Heart right ventricle (tissue), 16 donors: ENCODE measurements at regions of chr22 and their contacts with region 1.

Region 1: DNA sequence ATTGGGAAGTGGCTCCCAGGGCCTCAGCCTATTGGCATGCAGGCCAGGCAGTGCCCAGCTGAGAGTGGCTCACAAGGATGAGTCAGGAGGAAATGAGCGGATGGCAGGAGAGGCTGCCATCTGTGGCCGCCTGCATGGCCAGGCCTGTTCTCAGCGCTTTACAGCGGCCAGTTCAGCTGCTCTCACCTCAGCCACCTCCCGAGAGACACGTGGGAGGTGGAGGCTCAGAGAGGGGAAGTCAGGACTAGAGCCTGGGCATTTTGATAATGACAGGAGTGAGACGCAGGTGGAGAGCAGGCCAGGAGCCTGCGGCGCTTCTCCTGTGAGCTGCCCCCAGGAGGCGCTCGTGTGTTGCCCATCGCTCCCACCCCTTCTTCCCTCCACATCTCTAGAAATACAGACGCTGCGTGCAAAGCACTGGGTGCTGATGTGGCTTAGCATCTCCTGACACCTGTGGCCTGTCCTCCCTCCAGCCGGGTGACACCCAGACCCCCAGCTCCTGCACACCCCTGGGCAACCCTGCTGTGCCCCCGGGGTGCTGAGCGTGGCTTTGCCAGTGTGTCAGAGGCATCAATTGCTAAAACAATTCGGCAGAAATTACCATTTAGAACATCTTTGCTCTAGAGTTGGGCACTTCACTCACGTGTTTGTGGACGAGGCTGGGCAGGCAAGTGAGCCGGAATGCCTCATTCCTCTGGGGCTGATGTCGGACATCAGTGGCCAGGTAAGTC is 21.4 kb upstream of the PANX2 start:
- DNase-seq: peak in 1 of 2 donors; percentile 60
- ATAC-seq: peak; percentile 54 to 81 (median 73)
- H3K4me3 ChIP-seq: no peak overlapping the region
- H3K27ac ChIP-seq: no peak overlapping the region
- H3K4me1 ChIP-seq: peaks cover 0 to 20% (median 0%) of the 10 kb centered on the region in 9 donors
- H3K27me3 ChIP-seq: peaks cover 0 to 22% (median 13%) of the 10 kb centered on the region in 7 donors
- CTCF ChIP-seq: peak; percentile 38 to 90 (median 71)

Region 2: DNA sequence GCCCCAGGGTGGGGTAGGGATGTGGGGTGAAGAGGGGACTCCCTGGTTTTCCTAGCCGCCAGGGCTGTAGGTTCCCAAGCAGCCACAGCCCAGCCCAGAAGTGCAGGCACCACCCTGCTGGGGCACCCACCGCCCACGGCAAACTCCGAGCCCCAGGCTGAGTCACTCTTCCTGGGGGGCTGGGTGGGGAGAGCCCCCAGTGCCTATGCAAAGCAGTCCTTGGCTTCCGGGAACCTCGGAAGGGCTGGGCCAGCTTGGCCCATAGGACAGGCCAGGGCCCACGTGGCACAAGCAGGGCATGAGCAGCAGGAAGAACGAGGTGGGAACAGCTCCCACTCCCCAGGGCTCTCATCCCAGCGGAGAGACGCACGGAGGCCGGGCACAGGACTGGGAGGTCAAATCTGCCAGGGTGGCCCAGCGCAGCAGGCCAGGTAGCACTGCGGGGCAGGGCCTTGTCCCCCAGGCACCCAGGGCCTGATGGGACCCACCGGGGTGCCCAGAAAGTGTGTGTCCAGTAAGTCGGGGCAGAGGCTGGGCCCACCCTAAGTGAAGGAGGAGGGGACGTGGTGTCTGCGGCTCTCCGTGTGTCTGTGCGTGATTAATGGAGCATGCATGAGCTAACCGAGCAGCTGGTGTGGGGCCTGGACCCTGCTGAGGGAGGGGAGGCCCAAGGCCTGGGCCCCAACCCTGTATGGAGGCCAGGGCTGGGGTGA is 132.0 kb before region 1 on chr22:
- intact Hi-C with region 1: no loop called
- DNase-seq: no peak
- ATAC-seq: peak in 1 of 8 donors; percentile 36
- H3K4me3 ChIP-seq: no peak overlapping the region
- H3K27ac ChIP-seq: peak overlapping the region in 1 of 10 donors; percentile 56
- H3K4me1 ChIP-seq: peaks cover 0 to 10% (median 6%) of the 10 kb centered on the region in 9 donors
- H3K27me3 ChIP-seq: peaks cover 19 to 66% (median 59%) of the 10 kb centered on the region in 7 donors
- CTCF ChIP-seq: no peak

Region 3: GRCh38 chr22:50209893-50210292 is 60.7 kb after region 1 on chr22:
- intact Hi-C with region 1: loop called in 9 of 10 experiments (anchors 1 to 5 kb)
- DNase-seq: peak in 1 of 2 donors; percentile 58
- ATAC-seq: peak in 7 of 8 donors; percentile 15 to 55 (median 34)
- H3K4me3 ChIP-seq: no peak overlapping the region
- H3K27ac ChIP-seq: no peak overlapping the region
- H3K4me1 ChIP-seq: peaks cover 13 to 36% (median 23%) of the 10 kb centered on the region in 9 donors
- H3K27me3 ChIP-seq: no peaks in the 10 kb centered on the region
- CTCF ChIP-seq: peak; percentile 74 to 86 (median 83)

Region 4: GRCh38 chr22:50215297-50216054 is 66.3 kb after region 1 on chr22:
- intact Hi-C with region 1: loop called in 4 of 10 experiments (anchors 1 to 5 kb)
- DNase-seq: no peak
- ATAC-seq: no peak
- H3K4me3 ChIP-seq: no peak overlapping the region
- H3K27ac ChIP-seq: peak overlapping the region in 1 of 10 donors; percentile 48
- H3K4me1 ChIP-seq: peaks cover 0 to 15% (median 6%) of the 10 kb centered on the region in 9 donors
- H3K27me3 ChIP-seq: no peaks in the 10 kb centered on the region
- CTCF ChIP-seq: no peak

Region 5: GRCh38 chr22:50244420-50245213 is 95.5 kb after region 1 on chr22 and contains the start of gene TUBGCP6:
- intact Hi-C with region 1: no loop called
- DNase-seq: peak; percentile 95
- ATAC-seq: peak; percentile 90 to 96 (median 94)
- H3K4me3 ChIP-seq: peak within 1 kb of the TSS; percentile 68 to 100 (median 77)
- H3K27ac ChIP-seq: peak within 1 kb of the TSS; percentile 28 to 96 (median 86)
- H3K4me1 ChIP-seq: peaks cover 34 to 65% (median 51%) of the 10 kb centered on the region in 9 donors
- H3K27me3 ChIP-seq: no peaks in the 10 kb centered on the region
- CTCF ChIP-seq: peak in 3 of 9 donors; percentile 40 to 41 (median 40)
- total RNA-seq, gene TUBGCP6: 15.5 to 23.3 (median 18.5) TPM